Mammary epithelial cell (primary cell): ENCODE measurements at regions of chr17 and their contacts with region 1.

Region 1: GRCh38 chr17:82407255-82407654 is 10.9 kb upstream of the HEXD start:
- DNase-seq: no peak
- H3K4me3 ChIP-seq: no peak overlapping the region
- H3K27ac ChIP-seq: no peak overlapping the region
- H3K4me1 ChIP-seq: no peaks in the 10 kb centered on the region
- H3K27me3 ChIP-seq: no peaks in the 10 kb centered on the region
- CTCF ChIP-seq: no peak

Region 2: DNA sequence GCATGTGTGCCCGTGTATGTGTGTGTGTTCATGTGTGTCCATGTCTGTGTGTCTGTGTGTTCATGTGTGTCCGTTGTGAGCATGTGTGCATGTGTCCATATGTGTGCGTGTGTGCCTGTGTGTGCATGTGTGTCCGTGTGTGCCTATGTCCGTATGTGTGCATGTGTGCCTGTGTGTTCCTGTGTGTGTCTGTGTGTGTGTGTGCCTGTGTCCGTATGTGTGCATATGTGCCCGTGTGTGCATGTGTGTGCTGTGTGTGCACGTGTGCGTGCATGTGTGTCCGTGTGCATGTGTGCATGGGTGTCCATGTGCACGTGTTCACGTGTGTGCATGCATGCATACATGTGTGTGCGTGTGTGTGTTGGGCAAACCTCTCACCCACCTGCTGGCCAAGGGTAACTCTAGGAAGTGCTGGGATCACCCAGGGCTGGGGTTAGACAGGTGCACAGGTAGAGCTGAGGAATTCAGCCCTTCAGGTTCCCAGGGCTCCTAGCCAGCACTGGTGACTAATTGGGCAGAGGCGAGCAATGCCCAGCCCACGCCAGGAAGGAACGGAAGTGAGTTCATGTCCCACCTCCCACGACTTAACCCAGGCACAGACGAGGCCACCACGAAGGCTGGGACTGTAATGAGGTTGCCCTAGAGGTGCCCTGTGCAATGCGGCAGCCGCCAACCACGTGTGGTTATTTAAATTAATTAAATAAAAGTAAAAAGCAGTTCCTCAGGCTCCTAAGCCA is 125.6 kb before region 1 on chr17:
- CTCF ChIA-PET with region 1: no interaction called
- dilution Hi-C with region 1: loop called (anchors 5 kb)
- in situ Hi-C with region 1: no loop called
- intact Hi-C with region 1: no loop called
- DNase-seq: peak; percentile 92
- H3K4me3 ChIP-seq: no peak overlapping the region
- H3K27ac ChIP-seq: peak overlapping the region; percentile 65
- H3K4me1 ChIP-seq: peaks cover 42% of the 10 kb centered on the region
- H3K27me3 ChIP-seq: no peaks in the 10 kb centered on the region
- CTCF ChIP-seq: no peak

Region 3: DNA sequence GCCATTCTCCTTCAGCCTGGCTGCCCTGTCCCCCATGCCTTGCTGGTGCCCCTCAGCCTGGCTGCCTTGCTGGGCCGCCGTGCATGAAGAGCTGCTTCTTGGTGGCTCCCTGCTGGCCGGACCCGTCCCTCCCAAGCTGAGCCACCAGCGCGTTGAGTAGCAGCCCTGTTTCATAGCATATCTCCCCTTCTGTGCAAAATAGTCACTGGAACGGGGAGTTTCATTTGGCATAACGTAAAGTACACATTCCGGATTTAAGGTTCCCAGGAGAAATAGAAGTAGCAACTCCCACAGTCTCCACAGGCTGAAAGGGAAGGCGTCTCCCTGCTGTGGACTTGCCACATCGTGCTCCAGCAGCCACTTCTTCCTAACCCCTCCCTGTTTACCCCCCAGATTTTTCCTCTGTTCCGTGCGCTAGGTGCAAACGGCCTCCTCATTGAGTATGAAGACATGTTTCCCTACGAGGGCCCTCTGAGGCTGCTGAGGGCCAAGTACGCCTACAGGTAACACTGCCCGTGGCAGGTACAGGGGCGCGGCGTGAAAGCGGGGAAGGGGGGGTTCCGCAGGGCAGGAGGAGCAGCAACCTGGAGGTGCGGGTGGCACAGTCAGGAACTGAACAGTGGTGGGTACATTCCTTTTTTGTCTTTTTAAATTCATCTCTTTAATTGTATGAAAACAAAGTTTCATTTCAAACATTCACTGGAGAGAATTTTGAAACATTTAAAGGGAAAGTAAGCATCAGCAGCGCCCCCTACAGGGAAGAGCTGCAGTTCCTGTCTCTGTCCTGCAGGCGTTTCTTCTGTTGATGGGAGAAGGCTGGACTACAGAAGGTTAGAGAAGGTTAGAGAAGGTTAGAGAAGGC is 17.0 kb after region 1 on chr17:
- CTCF ChIA-PET with region 1: no interaction called
- dilution Hi-C with region 1: no loop called
- in situ Hi-C with region 1: no loop called
- intact Hi-C with region 1: no loop called
- DNase-seq: peak; percentile 21
- H3K4me3 ChIP-seq: no peak overlapping the region
- H3K27ac ChIP-seq: no peak overlapping the region
- H3K4me1 ChIP-seq: peaks cover 5% of the 10 kb centered on the region
- H3K27me3 ChIP-seq: no peaks in the 10 kb centered on the region
- CTCF ChIP-seq: peak; percentile 59 to 82